Endothelial cell of umbilical vein (primary cell): ENCODE measurements at regions of chr5 and their contacts with region 1.

Region 1: GRCh38 chr5:40333459-40334244 is 346.1 kb upstream of the PTGER4 start:
- DNase-seq: peak; percentile 90
- H3K4me3 ChIP-seq: no peak overlapping the region
- H3K27ac ChIP-seq: peak overlapping the region; percentile 70
- H3K4me1 ChIP-seq: peaks cover 20% of the 10 kb centered on the region
- H3K27me3 ChIP-seq: no peaks in the 10 kb centered on the region
- CTCF ChIP-seq: no peak
- POLR2A ChIP-seq: peak; percentile 54

Region 2: DNA sequence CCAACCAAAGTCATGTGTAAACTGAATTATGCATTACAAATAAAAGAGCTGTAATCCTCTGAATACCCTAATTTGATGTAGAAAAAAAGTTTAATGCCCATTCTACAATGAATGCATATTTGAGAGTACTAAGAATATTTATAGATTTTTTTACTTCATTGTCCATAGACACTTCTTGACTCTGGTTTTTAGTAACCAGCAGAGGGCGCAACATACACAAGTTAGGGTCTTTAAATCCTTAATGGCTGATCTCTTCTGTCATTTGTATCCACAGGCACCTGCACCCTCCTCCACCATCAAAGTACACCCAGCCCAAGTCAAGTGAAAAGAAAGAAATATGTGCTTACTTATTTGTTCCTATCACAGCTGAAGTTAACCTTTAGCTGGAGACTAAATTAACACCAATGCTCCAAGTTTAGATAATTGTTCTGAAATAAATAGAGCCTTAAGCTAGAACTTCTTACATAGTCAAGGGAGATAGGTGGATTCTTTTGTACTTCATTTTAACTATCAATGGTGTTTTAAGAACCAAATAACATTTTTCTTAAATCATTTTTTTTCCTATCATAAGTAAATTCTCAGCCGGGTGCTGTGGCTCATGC is 384.7 kb before region 1 on chr5:
- CTCF ChIA-PET with region 1: interaction called, 8 read pairs
- POLR2A ChIA-PET with region 1: no interaction called
- dilution Hi-C with region 1: no loop called
- intact Hi-C with region 1: loop called (anchors 1 kb)
- DNase-seq: peak; percentile 77
- H3K4me3 ChIP-seq: no peak overlapping the region
- H3K27ac ChIP-seq: no peak overlapping the region
- H3K4me1 ChIP-seq: no peaks in the 10 kb centered on the region
- H3K27me3 ChIP-seq: no peaks in the 10 kb centered on the region
- CTCF ChIP-seq: peak; percentile 49 to 55
- POLR2A ChIP-seq: no peak

Region 3: GRCh38 chr5:40106847-40107246 is 226.8 kb before region 1 on chr5:
- CTCF ChIA-PET with region 1: no interaction called
- POLR2A ChIA-PET with region 1: no interaction called
- dilution Hi-C with region 1: no loop called
- intact Hi-C with region 1: loop called (anchors 5 kb)
- DNase-seq: no peak
- H3K4me3 ChIP-seq: no peak overlapping the region
- H3K27ac ChIP-seq: no peak overlapping the region
- H3K4me1 ChIP-seq: peaks cover 12% of the 10 kb centered on the region
- H3K27me3 ChIP-seq: no peaks in the 10 kb centered on the region
- CTCF ChIP-seq: no peak
- POLR2A ChIP-seq: no peak

Region 4: GRCh38 chr5:40198736-40199135 is 134.9 kb before region 1 on chr5:
- CTCF ChIA-PET with region 1: no interaction called
- POLR2A ChIA-PET with region 1: no interaction called
- dilution Hi-C with region 1: no loop called
- intact Hi-C with region 1: loop called (anchors 1 kb)
- DNase-seq: peak; percentile 87
- H3K4me3 ChIP-seq: no peak overlapping the region
- H3K27ac ChIP-seq: peak overlapping the region; percentile 33
- H3K4me1 ChIP-seq: peaks cover 33% of the 10 kb centered on the region
- H3K27me3 ChIP-seq: no peaks in the 10 kb centered on the region
- CTCF ChIP-seq: no peak
- POLR2A ChIP-seq: no peak

Region 5: DNA sequence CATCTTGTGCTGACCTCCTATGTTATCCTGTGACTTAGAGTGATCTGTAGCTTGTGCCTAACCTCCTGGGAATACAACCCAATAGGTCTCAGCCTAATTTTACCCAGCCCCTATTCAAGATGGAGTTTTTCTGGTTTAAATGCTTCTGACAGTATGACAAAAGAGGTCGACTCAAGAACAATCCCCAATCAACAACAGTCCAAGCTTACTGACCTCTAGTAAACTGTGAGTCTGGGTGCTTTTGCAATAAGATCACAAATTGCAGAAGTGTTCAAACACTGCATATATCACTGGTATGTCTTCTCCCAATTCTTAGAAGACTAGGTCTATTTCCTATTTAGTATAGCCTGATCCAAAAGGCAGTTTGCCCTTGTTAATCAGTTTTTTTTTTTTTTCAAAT is 22.6 kb after region 1 on chr5:
- CTCF ChIA-PET with region 1: no interaction called
- POLR2A ChIA-PET with region 1: no interaction called
- dilution Hi-C with region 1: no loop called
- intact Hi-C with region 1: no loop called
- DNase-seq: no peak
- H3K4me3 ChIP-seq: no peak overlapping the region
- H3K27ac ChIP-seq: no peak overlapping the region
- H3K4me1 ChIP-seq: no peaks in the 10 kb centered on the region
- H3K27me3 ChIP-seq: no peaks in the 10 kb centered on the region
- CTCF ChIP-seq: no peak
- POLR2A ChIP-seq: no peak

Region 6: GRCh38 chr5:40410231-40410861 is 76.7 kb after region 1 on chr5:
- CTCF ChIA-PET with region 1: no interaction called
- POLR2A ChIA-PET with region 1: no interaction called
- dilution Hi-C with region 1: no loop called
- intact Hi-C with region 1: loop called (anchors 1 kb)
- DNase-seq: peak; percentile 97
- H3K4me3 ChIP-seq: peak overlapping the region in 1 of 3 experiments; percentile 24
- H3K27ac ChIP-seq: peak overlapping the region; percentile 81
- H3K4me1 ChIP-seq: peaks cover 24% of the 10 kb centered on the region
- H3K27me3 ChIP-seq: no peaks in the 10 kb centered on the region
- CTCF ChIP-seq: no peak
- POLR2A ChIP-seq: peak; percentile 13

Region 7: GRCh38 chr5:40551496-40552491 is 218.1 kb after region 1 on chr5:
- CTCF ChIA-PET with region 1: no interaction called
- POLR2A ChIA-PET with region 1: no interaction called
- dilution Hi-C with region 1: no loop called
- intact Hi-C with region 1: loop called (anchors 2 kb)
- DNase-seq: peak; percentile 81
- H3K4me3 ChIP-seq: peak overlapping the region in 2 of 3 experiments; percentile 8 to 17
- H3K27ac ChIP-seq: peak overlapping the region; percentile 92
- H3K4me1 ChIP-seq: peaks cover 25% of the 10 kb centered on the region
- H3K27me3 ChIP-seq: no peaks in the 10 kb centered on the region
- CTCF ChIP-seq: no peak
- POLR2A ChIP-seq: peak; percentile 30

Region 8: GRCh38 chr5:40736103-40736875 is 402.6 kb after region 1 on chr5:
- CTCF ChIA-PET with region 1: no interaction called
- POLR2A ChIA-PET with region 1: no interaction called
- dilution Hi-C with region 1: no loop called
- intact Hi-C with region 1: loop called (anchors 2 kb)
- DNase-seq: peak; percentile 84
- H3K4me3 ChIP-seq: no peak overlapping the region
- H3K27ac ChIP-seq: peak overlapping the region; percentile 84
- H3K4me1 ChIP-seq: peaks cover 36% of the 10 kb centered on the region
- H3K27me3 ChIP-seq: no peaks in the 10 kb centered on the region
- CTCF ChIP-seq: peak; percentile 40 to 50
- POLR2A ChIP-seq: no peak